ENCODE measurements at regions of chr4 and their contacts with region 1.

Region 1: DNA sequence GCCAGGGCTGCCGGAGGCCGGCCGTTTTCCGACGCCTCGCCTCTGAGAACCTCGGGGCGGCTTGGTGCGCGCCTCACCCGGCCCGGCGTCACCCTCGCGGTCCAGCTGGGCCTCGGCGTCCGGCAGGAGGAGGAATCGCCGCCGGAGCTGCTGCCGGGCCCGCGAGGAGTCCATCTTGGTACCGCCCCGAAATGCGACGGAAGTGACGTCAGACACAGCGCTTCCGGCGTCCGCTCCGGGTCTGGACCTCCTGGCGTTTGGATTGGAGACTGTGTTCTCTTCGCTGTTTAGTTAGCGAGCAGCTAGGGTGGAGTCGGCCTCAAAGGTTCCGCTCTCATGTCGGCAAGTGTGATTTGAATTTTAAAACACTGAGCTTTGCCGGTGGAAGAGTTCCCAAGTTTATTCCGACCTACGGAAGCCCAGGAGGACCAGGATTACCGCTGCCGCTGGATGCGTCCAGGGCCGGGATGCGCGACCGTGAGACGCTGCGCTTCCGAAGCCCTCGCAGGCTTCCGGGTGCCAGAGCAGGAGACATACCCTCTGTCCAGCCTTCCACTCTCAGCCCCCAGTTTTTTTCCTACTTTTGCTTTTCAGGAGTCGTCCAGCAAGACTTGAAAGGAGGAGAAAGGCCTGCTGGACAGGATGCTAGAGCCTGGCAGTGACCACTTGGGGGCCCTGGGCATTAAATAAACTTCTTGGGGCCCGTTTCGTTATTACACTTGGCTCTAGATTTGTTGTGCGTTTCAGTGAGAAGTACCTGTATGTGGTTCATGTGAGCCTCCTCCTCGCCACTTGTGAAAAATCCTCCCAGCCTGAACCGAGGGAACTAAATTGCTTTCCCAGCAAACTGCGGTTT is at the start of gene TMEM128:
- DNase-seq: peak; percentile 93 to 97
- ATAC-seq: peak; percentile 94 to 97 (median 97)
- H3K4me3 ChIP-seq: peak within 1 kb of the TSS; percentile 68
- H3K4me3 Mint-ChIP-seq: peak within 1 kb of the TSS; percentile 97
- H3K27ac ChIP-seq: peak within 1 kb of the TSS; percentile 84
- H3K27ac Mint-ChIP-seq: peak within 1 kb of the TSS; percentile 99
- H3K4me1 ChIP-seq: peaks cover 12% of the 10 kb centered on the region
- H3K4me1 Mint-ChIP-seq: peaks cover 21 to 36% of the 10 kb centered on the region in 2 donors
- H3K27me3 ChIP-seq: no peaks in the 10 kb centered on the region
- H3K27me3 Mint-ChIP-seq: no peaks in the 10 kb centered on the region
- CTCF ChIP-seq: peak; percentile 16
- total RNA-seq, gene TMEM128: 9.3 to 12.2 (median 11.4) TPM

Region 2: GRCh38 chr4:4308800-4309441 is 60.7 kb after region 1 on chr4:
- intact Hi-C with region 1: no loop called
- DNase-seq: no peak
- ATAC-seq: no peak
- H3K4me3 ChIP-seq: no peak overlapping the region
- H3K4me3 Mint-ChIP-seq: no peak overlapping the region
- H3K27ac ChIP-seq: no peak overlapping the region
- H3K27ac Mint-ChIP-seq: no peak overlapping the region
- H3K4me1 ChIP-seq: no peaks in the 10 kb centered on the region
- H3K4me1 Mint-ChIP-seq: peaks cover 12 to 17% of the 10 kb centered on the region in 2 donors
- H3K27me3 ChIP-seq: no peaks in the 10 kb centered on the region
- H3K27me3 Mint-ChIP-seq: no peaks in the 10 kb centered on the region
- CTCF ChIP-seq: no peak

Region 3: DNA sequence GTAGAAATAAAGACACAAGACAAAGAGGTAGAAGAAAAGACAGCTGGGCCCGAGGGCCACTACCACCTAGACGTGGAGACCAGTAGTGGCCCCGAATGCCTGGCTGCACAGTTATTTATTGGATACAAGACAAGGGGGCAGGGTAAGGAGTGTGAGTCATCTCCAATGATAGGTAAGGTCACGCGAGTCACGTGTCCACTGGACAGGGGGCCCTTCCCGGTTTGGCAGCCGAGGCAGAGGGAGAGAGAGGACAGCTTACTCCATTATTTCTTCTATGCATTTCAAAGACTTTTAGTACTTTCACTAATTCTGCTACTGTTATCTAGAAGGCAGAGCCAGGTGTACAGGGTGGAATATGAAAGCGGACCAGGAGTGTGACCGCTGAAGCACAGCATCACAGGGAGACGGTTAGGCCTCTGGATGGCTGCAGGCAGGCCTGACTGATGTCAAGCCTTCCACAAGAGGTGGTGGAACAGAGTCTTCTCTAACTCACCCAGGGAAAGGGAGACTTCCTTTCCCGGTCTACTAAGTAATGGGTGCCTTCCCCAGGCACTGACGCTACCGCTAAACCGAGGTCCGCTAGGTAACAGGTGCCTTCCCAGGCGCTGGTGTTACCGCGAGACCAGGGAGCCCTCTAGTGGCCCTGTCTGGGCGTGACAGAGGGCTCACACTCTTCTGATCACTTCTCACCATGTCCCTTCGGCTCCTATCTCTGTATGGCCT is 86.7 kb after region 1 on chr4:
- intact Hi-C with region 1: loop called (anchors 1 kb)
- DNase-seq: peak; percentile 73 to 89
- ATAC-seq: peak; percentile 71 to 95 (median 89)
- H3K4me3 ChIP-seq: no peak overlapping the region
- H3K4me3 Mint-ChIP-seq: no peak overlapping the region
- H3K27ac ChIP-seq: no peak overlapping the region
- H3K27ac Mint-ChIP-seq: peak overlapping the region in 1 of 2 donors; percentile 50
- H3K4me1 ChIP-seq: peaks cover 4% of the 10 kb centered on the region
- H3K4me1 Mint-ChIP-seq: peaks cover 8 to 9% of the 10 kb centered on the region in 2 donors
- H3K27me3 ChIP-seq: no peaks in the 10 kb centered on the region
- H3K27me3 Mint-ChIP-seq: no peaks in the 10 kb centered on the region
- CTCF ChIP-seq: peak; percentile 94

Region 4: GRCh38 chr4:4430492-4431197 is 182.4 kb after region 1 on chr4:
- intact Hi-C with region 1: loop called (anchors 2 kb)
- DNase-seq: peak; percentile 29 to 77
- ATAC-seq: peak in 2 of 3 donors; percentile 87 to 91
- H3K4me3 ChIP-seq: no peak overlapping the region
- H3K4me3 Mint-ChIP-seq: no peak overlapping the region
- H3K27ac ChIP-seq: no peak overlapping the region
- H3K27ac Mint-ChIP-seq: no peak overlapping the region
- H3K4me1 ChIP-seq: no peaks in the 10 kb centered on the region
- H3K4me1 Mint-ChIP-seq: peaks cover 0 to 7% of the 10 kb centered on the region in 2 donors
- H3K27me3 ChIP-seq: no peaks in the 10 kb centered on the region
- H3K27me3 Mint-ChIP-seq: no peaks in the 10 kb centered on the region
- CTCF ChIP-seq: peak; percentile 62

Region 5: GRCh38 chr4:4651811-4652755 is 403.8 kb after region 1 on chr4:
- intact Hi-C with region 1: no loop called
- DNase-seq: no peak
- ATAC-seq: no peak
- H3K4me3 ChIP-seq: no peak overlapping the region
- H3K4me3 Mint-ChIP-seq: no peak overlapping the region
- H3K27ac ChIP-seq: no peak overlapping the region
- H3K27ac Mint-ChIP-seq: no peak overlapping the region
- H3K4me1 ChIP-seq: no peaks in the 10 kb centered on the region
- H3K4me1 Mint-ChIP-seq: no peaks in the 10 kb centered on the region
- H3K27me3 ChIP-seq: no peaks in the 10 kb centered on the region
- H3K27me3 Mint-ChIP-seq: no peaks in the 10 kb centered on the region
- CTCF ChIP-seq: no peak